Uterus (tissue), 4 donors: ENCODE measurements at regions of chr12 and their contacts with region 1.

Region 1: DNA sequence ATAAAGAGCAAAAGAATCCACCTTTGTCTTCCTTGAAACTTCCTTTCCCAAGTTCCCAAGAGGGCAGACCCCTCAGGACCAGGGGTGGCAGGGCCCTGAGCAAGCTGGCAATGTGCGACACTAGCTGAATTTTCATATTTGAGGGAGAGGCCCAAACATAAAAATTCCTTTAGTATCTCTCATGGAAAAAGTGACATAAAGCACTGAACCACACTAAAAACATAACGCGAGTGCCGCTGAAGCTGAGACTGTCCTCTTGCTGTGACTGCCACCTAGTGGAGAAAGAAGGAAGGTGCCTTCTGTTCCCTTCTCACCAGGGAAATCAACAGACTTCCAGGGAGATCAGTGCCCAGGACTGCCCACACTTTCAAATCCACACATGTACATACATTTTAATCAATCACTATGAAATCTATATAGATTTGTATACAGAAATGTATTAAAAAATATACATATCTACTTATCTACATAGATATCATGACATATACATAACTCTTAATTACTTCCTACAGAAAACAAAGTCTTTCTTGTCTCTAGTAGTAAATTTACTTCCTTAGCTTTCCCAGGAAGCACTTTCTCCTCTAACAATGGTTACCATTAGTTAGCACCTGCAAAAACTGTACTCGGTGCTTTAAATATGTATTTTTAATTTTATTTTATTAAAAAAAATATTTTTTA is 53.8 kb downstream of the SSH1 start:
- DNase-seq: peak; percentile 75 to 93
- H3K4me3 ChIP-seq: no peak overlapping the region
- H3K27ac ChIP-seq: peak overlapping the region; percentile 96
- H3K4me1 ChIP-seq: peaks cover 9 to 14% of the 10 kb centered on the region in 2 donors
- H3K27me3 ChIP-seq: no peaks in the 10 kb centered on the region
- CTCF ChIP-seq: peak; percentile 95 to 97 (median 96)
- POLR2A ChIP-seq: no peak

Region 2: GRCh38 chr12:108664338-108665258 is 139.0 kb before region 1 on chr12:
- intact Hi-C with region 1: loop called (anchors 2 kb)
- DNase-seq: peak; percentile 85 to 95
- H3K4me3 ChIP-seq: no peak overlapping the region
- H3K27ac ChIP-seq: peak overlapping the region; percentile 86 to 90
- H3K4me1 ChIP-seq: peaks cover 18 to 20% of the 10 kb centered on the region in 2 donors
- H3K27me3 ChIP-seq: no peaks in the 10 kb centered on the region
- CTCF ChIP-seq: peak; percentile 87 to 98 (median 95)
- POLR2A ChIP-seq: peak in 1 of 2 donors; percentile 6

Region 3: DNA sequence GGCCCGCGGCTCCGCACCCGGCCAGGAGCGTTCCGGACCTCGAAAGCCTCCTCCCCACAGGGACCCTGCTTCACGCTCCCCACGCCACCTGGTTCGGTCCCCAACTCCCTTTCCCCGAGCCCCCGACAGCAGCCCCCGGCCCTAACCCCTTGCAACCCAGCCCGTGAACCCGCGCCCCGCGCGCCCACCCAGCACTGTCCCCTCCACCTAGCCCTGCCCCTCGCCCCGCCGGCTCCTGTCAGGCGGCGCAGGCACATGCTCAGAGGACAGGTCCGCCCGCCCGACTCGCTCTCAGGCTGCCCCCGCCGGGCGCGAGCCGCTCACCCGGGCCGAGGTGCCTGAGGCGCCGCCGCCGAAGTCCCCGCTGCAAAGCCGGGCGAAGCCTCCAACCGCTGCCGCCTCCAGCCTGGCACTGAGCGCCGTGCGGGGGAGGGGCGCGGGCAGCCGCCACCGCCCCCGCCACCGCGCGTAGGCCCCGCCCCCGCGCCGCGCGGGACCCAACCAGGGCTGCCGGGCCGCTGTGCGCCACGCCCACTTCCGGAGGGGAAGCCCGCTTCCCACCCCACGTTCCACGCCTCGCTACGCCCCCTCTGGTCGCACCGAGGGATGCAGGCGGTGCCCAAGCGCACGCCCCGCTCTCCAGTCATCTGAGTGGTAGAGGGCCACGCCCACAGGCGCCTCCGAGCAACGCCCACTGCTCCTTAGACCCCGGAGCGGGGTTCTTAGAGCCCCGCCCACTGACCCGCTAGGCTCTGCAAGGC is 72.3 kb before region 1 on chr12 and contains the start of gene CORO1C:
- intact Hi-C with region 1: loop called (anchors 10 kb)
- DNase-seq: peak; percentile 93 to 96
- H3K4me3 ChIP-seq: peak within 1 kb of the TSS; percentile 64 to 87
- H3K27ac ChIP-seq: peak within 1 kb of the TSS; percentile 96 to 98
- H3K4me1 ChIP-seq: no peaks in the 10 kb centered on the region
- H3K27me3 ChIP-seq: no peaks in the 10 kb centered on the region
- CTCF ChIP-seq: peak; percentile 62 to 91 (median 82)
- POLR2A ChIP-seq: peak; percentile 95 to 99
- total RNA-seq, gene CORO1C: 129 to 357 (median 235) TPM